ENCODE measurements at regions of chr4 and their contacts with region 1.

Region 1: GRCh38 chr4:4569028-4569427 is 27.2 kb upstream of the STX18 start:
- DNase-seq: no peak
- ATAC-seq: no peak
- H3K4me3 ChIP-seq: no peak overlapping the region
- H3K27ac ChIP-seq: no peak overlapping the region
- H3K4me1 ChIP-seq: no peaks in the 10 kb centered on the region
- H3K27me3 ChIP-seq: no peaks in the 10 kb centered on the region
- CTCF ChIP-seq: no peak
- EP300 ChIP-seq: no peak
- POLR2A ChIP-seq: no peak
- RAD21 ChIP-seq: no peak

Region 2: GRCh38 chr4:4362991-4363697 is 205.9 kb before region 1 on chr4:
- CTCF ChIA-PET with region 1: no interaction called
- POLR2A ChIA-PET with region 1: no interaction called
- in situ Hi-C with region 1: no loop called
- intact Hi-C with region 1: no loop called
- DNase-seq: no peak
- ATAC-seq: peak; percentile 66
- H3K4me3 ChIP-seq: no peak overlapping the region
- H3K27ac ChIP-seq: no peak overlapping the region
- H3K4me1 ChIP-seq: no peaks in the 10 kb centered on the region
- H3K27me3 ChIP-seq: peaks cover 0 to 23% of the 10 kb centered on the region in 2 experiments; a peak in 3 of 5 replicates
- CTCF ChIP-seq: peak; percentile 51
- EP300 ChIP-seq: no peak
- POLR2A ChIP-seq: no peak
- RAD21 ChIP-seq: no peak

Region 3: GRCh38 chr4:4541661-4542570 is 27.1 kb before region 1 on chr4 and contains the start of gene STX18:
- CTCF ChIA-PET with region 1: no interaction called
- POLR2A ChIA-PET with region 1: no interaction called
- in situ Hi-C with region 1: no loop called
- intact Hi-C with region 1: no loop called
- DNase-seq: peak; percentile 73
- ATAC-seq: peak; percentile 96
- H3K4me3 ChIP-seq: peak within 1 kb of the TSS; percentile 86 to 94 (median 86)
- H3K27ac ChIP-seq: peak within 1 kb of the TSS; percentile 91
- H3K4me1 ChIP-seq: peaks cover 54% of the 10 kb centered on the region
- H3K27me3 ChIP-seq: no peaks in the 10 kb centered on the region
- CTCF ChIP-seq: peak; percentile 38; the same call in 1 of the 2 replicates
- EP300 ChIP-seq: peak; percentile 58 to 79; a peak in 3 of 4 replicates
- POLR2A ChIP-seq: peak; percentile 70 to 81
- RAD21 ChIP-seq: peak; percentile 74
- total RNA-seq, gene STX18: 37.1 and 41.2 TPM in 2 replicates

Region 4: DNA sequence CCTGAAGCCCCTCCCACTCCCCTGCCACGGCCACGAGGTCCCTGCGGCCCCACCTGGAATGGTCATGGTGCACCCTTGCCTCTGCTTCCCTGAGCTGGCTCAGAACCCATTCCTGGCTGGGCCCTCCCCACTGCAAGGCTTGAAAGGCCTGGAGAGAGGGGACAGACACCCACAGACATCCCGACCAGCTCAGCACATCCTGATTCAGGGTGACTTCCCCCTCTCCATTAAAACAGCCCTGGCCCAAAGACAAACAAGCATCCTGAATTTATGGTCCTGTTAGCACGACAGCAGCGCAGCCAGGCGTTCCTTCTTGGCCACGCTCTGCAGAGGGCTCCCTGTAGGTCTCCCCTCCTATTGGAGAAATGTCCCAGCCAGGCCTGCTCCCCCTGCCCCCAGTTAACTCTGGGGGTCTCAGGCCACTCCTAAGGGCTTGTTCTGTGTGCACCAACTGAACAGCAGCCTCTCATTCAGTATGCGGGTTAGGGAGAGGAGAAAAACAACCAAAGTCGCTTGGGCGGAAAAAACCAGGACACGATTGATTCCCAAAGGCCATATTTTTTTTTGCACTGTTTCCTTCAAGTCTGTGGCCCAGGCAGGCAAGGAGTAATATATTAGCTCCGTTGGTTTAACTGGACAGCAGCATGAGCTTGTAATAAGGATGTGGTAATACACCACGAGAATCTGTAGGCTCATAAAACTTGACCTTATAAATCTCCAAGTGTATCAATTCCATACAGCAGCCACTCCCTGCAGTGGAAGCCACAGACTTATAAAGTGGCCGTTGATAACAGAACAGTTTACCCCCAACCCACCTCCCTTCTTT is 183.8 kb after region 1 on chr4:
- CTCF ChIA-PET with region 1: no interaction called
- POLR2A ChIA-PET with region 1: no interaction called
- in situ Hi-C with region 1: no loop called
- intact Hi-C with region 1: no loop called
- DNase-seq: no peak
- ATAC-seq: no peak
- H3K4me3 ChIP-seq: no peak overlapping the region
- H3K27ac ChIP-seq: no peak overlapping the region
- H3K4me1 ChIP-seq: peaks cover 28% of the 10 kb centered on the region
- H3K27me3 ChIP-seq: no peaks in the 10 kb centered on the region; a peak in 1 of 5 replicates
- CTCF ChIP-seq: no peak
- EP300 ChIP-seq: no peak
- POLR2A ChIP-seq: no peak
- RAD21 ChIP-seq: no peak

Region 5: DNA sequence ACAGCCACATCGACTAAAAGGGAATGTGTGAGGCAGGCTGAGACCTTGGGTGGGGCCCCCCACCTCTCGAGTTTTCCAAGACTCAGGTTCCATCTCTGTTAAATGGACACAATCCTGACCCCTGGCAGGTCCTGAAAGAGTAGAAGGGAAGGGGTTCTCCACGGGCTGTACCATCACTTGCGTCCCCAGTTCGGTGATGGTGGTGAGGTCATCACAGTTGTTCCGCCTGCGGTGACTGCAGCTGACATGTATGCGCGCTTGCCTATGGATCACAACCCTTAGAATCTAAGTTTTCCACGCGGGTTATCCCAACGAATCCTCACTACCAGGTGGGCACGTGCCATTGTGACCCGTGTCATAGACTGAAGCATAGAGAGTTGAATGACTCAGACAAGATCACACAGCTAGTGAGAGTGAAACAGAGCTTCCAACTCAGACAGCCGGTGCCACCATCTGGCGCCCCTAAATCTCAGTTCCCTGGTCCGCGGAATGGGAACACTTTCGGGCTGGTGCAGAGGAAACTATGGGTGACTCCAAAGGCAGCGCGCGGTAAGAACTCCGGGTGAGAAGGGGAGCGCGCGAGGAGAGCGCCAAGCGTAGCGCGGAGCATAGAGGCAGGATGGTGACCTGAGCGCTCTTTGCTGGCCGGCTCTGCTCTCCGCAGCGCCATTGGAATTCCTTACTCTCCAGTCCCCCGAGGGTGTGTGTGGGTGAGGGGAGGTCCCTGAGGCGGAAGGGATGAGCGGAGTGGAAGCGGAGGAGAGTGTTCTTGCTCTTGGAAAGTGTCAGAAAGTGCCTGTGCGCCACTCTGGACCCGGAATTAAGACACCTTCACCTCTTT is 300.9 kb after region 1 on chr4:
- CTCF ChIA-PET with region 1: no interaction called
- POLR2A ChIA-PET with region 1: no interaction called
- in situ Hi-C with region 1: loop called (anchors 10 kb)
- intact Hi-C with region 1: no loop called
- DNase-seq: no peak
- ATAC-seq: peak; percentile 36
- H3K4me3 ChIP-seq: no peak overlapping the region
- H3K27ac ChIP-seq: no peak overlapping the region
- H3K4me1 ChIP-seq: peaks cover 9% of the 10 kb centered on the region; the same call in 1 of the 2 replicates
- H3K27me3 ChIP-seq: peaks cover 0 to 56% of the 10 kb centered on the region in 2 experiments
- CTCF ChIP-seq: no peak
- EP300 ChIP-seq: no peak
- POLR2A ChIP-seq: no peak
- RAD21 ChIP-seq: no peak

Measured in HepG2 (cell line).